ENCODE measurements at regions of chr11 and their contacts with region 1.

Region 1: GRCh38 chr11:77820563-77821348 is at the starts of genes AAMDC and RSF1:
- DNase-seq: peak; percentile 98
- ATAC-seq: peak; percentile 83
- H3K4me3 ChIP-seq: peak within 1 kb of the TSS; percentile 77 to 98 (median 94)
- H3K4me3 Mint-ChIP-seq: peak within 1 kb of the TSS; percentile 100
- H3K27ac ChIP-seq: peak within 1 kb of the TSS; percentile 81 to 83
- H3K27ac Mint-ChIP-seq: peak within 1 kb of the TSS; percentile 95
- H3K4me1 ChIP-seq: peaks cover 14 to 26% of the 10 kb centered on the region in 2 donors
- H3K4me1 Mint-ChIP-seq: peaks cover 36% of the 10 kb centered on the region
- H3K27me3 ChIP-seq: no peaks in the 10 kb centered on the region
- H3K27me3 Mint-ChIP-seq: no peaks in the 10 kb centered on the region
- CTCF ChIP-seq: peak; percentile 73
- total RNA-seq, gene AAMDC: 4.6 and 7.5 TPM in 2 replicates
- total RNA-seq, gene RSF1: 100 and 104 TPM in 2 replicates

Region 2: DNA sequence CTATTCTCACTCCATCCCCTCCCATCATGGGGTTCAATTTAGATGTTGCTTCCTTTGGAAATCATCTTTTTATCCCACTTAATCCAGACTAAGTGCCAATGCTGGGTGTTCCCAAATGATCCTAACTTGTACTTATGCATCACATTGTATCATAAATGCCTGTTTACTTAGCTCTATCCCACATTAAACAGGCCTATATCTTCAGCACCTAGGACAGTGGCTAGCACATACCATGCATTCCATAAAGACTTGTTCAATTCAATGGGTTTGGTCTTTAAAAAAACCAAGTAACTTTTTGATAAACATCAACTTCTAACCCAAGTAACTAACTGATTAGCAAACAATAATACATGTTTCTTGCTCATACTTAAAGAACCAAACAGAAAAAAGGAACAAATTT is 40.8 kb before region 1 on chr11:
- CTCF ChIA-PET with region 1: no interaction called
- POLR2A ChIA-PET with region 1: no interaction called
- intact Hi-C with region 1: loop called (anchors 5 kb)
- DNase-seq: no peak
- ATAC-seq: no peak
- H3K4me3 ChIP-seq: no peak overlapping the region
- H3K4me3 Mint-ChIP-seq: no peak overlapping the region
- H3K27ac ChIP-seq: no peak overlapping the region
- H3K27ac Mint-ChIP-seq: no peak overlapping the region
- H3K4me1 ChIP-seq: peaks cover 12 to 20% of the 10 kb centered on the region in 2 donors
- H3K4me1 Mint-ChIP-seq: peaks cover 47% of the 10 kb centered on the region
- H3K27me3 ChIP-seq: no peaks in the 10 kb centered on the region
- H3K27me3 Mint-ChIP-seq: no peaks in the 10 kb centered on the region
- CTCF ChIP-seq: no peak